ENCODE measurements at regions of chr22 and their contacts with region 1.

Region 1: DNA sequence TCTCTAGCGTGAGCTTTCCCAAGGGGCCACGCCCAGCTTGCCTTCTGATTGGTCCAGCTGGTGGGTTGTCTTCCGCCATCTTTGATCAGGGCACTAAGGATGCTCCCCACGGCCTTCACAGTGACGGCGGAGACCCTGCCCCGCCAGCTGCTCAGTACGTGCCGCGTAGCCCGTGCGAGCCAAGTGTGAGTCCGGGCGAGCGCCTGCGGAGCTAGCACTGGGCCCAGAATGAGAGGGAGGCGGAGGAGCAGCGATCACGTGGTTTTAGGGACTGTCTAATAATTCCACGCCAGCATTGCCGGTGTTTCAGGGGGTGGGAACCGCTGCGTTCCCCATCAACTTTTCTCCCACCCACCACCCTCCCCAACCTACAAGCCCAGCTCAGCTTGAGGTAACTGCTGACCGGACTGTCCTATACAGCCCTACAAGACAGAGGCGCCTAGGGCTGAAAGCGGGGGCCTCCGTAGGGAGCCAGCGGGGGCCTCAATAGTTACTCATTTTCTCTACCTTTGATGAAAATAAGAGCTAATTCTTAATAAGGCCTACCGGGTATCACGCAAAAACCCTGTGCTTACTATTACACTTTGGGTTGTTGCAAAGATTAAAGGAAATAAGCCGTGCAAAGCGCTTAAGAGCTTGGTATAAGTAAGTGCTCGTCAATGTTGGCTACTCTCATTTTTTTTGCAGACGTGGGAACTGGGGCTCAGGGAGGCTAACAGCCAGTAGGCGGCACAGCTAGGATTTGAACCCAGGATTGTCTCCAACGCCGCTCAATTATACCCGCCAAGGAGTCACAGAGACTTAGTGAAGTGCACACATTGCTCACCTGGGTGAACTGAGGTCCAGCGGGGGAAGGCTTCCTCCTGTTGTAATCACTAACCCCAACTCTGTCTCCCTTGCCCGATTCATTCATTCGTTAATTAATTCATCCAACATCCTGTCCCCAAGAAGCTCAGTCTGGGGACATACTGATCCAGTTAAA is 1.3 kb upstream of the MTFP1 start:
- DNase-seq: peak; percentile 91 to 100 (median 98)
- ATAC-seq: peak; percentile 82 to 83
- H3K4me3 Mint-ChIP-seq: peak overlapping the region; percentile 92 to 99 (median 98)
- H3K27ac Mint-ChIP-seq: peak overlapping the region; percentile 97 to 100 (median 99)
- H3K4me1 Mint-ChIP-seq: peaks cover 28 to 56% (median 55%) of the 10 kb centered on the region in 4 donors
- H3K27me3 Mint-ChIP-seq: no peaks in the 10 kb centered on the region

Region 2: DNA sequence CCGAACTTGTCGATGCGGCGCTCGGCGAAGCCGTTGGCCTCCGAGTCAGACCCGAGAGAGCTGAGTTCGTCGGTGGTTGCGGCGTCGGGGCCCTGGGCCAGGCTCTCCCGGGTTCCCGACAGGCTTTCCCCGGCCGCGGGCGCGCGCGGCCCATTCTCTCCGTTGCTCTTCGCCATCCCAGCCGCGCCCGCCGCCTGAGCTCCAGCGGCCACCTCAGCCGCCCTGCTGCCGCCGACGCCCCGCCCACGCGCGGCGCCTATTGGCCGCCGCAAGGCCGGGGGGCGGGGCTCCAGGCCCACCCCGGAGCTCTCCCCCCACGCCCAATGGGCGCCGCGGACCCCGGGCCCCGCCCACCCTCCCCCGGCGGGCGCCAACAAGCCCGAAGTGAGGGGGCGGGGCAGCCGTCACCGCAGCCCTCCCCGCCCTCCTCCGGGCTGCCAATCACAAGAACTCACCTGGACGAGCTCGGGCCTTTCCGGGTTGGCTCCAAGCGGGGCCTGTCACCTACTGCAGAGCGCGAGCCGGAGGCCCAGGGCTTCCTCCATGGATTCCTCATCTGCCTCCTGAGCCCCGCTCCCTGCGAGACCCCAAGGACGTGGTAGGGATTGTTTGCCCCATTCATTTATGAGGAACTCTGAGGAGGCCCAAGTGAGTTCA is 97.4 kb before region 1 on chr22 and contains the start of gene TBC1D10A:
- POLR2A ChIA-PET with region 1: interaction called, 14 read pairs
- DNase-seq: peak; percentile 85 to 98 (median 93)
- ATAC-seq: peak; percentile 87
- H3K4me3 Mint-ChIP-seq: peak within 1 kb of the TSS; percentile 89 to 98 (median 92)
- H3K27ac Mint-ChIP-seq: peak within 1 kb of the TSS; percentile 86 to 98 (median 94)
- H3K4me1 Mint-ChIP-seq: peaks cover 31 to 54% (median 48%) of the 10 kb centered on the region in 4 donors
- H3K27me3 Mint-ChIP-seq: no peaks in the 10 kb centered on the region
- polyA plus RNA-seq, gene TBC1D10A: 56.7 to 83.4 (median 62.0) TPM

Region 3: GRCh38 chr22:30386960-30387827 is 37.1 kb before region 1 on chr22 and contains the start of gene RNF215:
- POLR2A ChIA-PET with region 1: interaction called, 43 read pairs
- DNase-seq: peak; percentile 61 to 90 (median 81)
- ATAC-seq: peak; percentile 78
- H3K4me3 Mint-ChIP-seq: peak within 1 kb of the TSS; percentile 61 to 91 (median 80)
- H3K27ac Mint-ChIP-seq: peak within 1 kb of the TSS in 8 of 10 donors; percentile 55 to 93 (median 84)
- H3K4me1 Mint-ChIP-seq: peaks cover 14 to 27% (median 24%) of the 10 kb centered on the region in 4 donors
- H3K27me3 Mint-ChIP-seq: no peaks in the 10 kb centered on the region
- polyA plus RNA-seq, gene RNF215: 0.14 to 0.44 (median 0.39) TPM

Region 4: GRCh38 chr22:30396871-30397655 is 27.2 kb before region 1 on chr22 and contains the start of gene SEC14L2:
- POLR2A ChIA-PET with region 1: interaction called, 118 read pairs
- DNase-seq: peak; percentile 19 to 72 (median 58)
- ATAC-seq: peak; percentile 75 to 79
- H3K4me3 Mint-ChIP-seq: peak within 1 kb of the TSS; percentile 82 to 95 (median 90)
- H3K27ac Mint-ChIP-seq: peak within 1 kb of the TSS; percentile 78 to 96 (median 92)
- H3K4me1 Mint-ChIP-seq: peaks cover 30 to 66% (median 56%) of the 10 kb centered on the region in 4 donors
- H3K27me3 Mint-ChIP-seq: peaks cover 0 to 6% (median 0%) of the 10 kb centered on the region in 5 donors
- polyA plus RNA-seq, gene SEC14L2: 16.8 to 25.9 (median 22.5) TPM

Region 5: GRCh38 chr22:30402028-30402765 is 22.1 kb before region 1 on chr22:
- POLR2A ChIA-PET with region 1: interaction called, 118 read pairs
- DNase-seq: no peak
- ATAC-seq: no peak
- H3K4me3 Mint-ChIP-seq: no peak overlapping the region
- H3K27ac Mint-ChIP-seq: peak overlapping the region in 5 of 10 donors; percentile 29 to 82 (median 57)
- H3K4me1 Mint-ChIP-seq: peaks cover 21 to 30% (median 27%) of the 10 kb centered on the region in 4 donors
- H3K27me3 Mint-ChIP-seq: peaks cover 0 to 4% (median 0%) of the 10 kb centered on the region in 5 donors

Region 6: DNA sequence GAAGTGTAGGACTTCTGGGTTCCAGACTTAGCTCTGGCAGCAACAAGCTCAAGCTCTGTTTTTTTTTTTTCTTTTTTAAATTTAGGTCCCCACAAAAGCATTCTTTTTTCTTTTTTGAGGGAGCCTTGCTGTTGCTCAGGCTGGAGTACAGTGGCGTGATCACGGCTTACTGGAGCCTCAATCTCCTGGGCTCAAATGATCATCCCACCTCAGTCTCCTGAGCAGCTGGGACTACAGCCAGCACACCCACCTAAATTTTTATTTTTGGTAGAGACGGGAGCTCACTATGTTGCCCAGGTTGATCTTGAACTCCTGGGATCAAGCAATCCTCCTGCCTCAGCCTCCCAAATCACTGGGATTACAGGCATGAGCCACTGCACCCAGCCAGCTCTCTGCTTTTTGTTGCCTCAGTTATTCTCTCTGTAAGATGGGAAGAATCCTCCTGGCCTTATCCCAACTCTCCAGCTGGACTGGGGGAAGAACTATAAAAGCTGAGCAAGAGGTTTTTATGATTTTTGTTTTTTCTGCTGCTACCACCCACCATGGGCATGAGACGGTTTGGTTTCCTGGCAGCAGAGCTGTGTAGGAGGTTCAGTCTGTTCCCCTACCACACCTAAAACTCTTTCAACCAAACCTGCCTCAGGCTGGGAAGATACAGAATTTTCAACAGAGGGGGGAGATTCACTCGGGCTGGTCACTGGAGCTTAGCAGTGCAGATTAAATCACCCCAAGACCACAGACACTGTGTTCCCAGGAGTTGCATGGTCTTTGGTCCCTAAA is 10.3 kb before region 1 on chr22:
- POLR2A ChIA-PET with region 1: interaction called, 95 read pairs
- DNase-seq: peak in 2 of 10 donors; percentile 35 to 45
- ATAC-seq: peak; percentile 87
- H3K4me3 Mint-ChIP-seq: peak overlapping the region; percentile 0 to 84 (median 63)
- H3K27ac Mint-ChIP-seq: peak overlapping the region; percentile 87 to 97 (median 94)
- H3K4me1 Mint-ChIP-seq: peaks cover 24 to 68% (median 46%) of the 10 kb centered on the region in 4 donors
- H3K27me3 Mint-ChIP-seq: no peaks in the 10 kb centered on the region

Region 7: DNA sequence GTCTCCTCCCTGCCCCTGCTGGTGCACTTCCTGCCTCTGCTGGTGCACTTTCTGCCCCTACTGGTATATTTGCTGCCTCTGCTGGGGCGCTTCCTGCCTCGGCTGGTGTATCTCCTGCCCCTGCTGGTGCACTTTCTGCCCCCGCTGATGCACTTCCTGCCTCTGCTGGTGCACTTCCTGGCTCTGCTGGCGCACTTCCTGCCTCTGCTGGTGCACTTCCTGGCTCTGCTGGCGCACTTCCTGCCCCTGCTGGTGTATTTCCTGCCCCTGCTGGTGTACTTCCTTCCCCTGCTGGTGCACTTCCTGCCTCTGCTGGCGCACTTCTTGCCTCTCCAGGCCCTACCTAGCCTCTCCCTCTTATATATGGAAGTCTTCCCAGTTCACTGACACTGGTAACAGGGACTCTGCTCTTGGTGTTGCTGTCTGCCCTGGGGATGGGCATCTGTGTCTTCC is 11.4 kb after region 1 on chr22:
- POLR2A ChIA-PET with region 1: interaction called, 89 read pairs
- DNase-seq: peak; percentile 75 to 98 (median 92)
- ATAC-seq: peak; percentile 91
- H3K4me3 Mint-ChIP-seq: peak overlapping the region; percentile 73 to 93 (median 84)
- H3K27ac Mint-ChIP-seq: peak overlapping the region; percentile 94 to 100 (median 100)
- H3K4me1 Mint-ChIP-seq: peaks cover 12 to 23% (median 18%) of the 10 kb centered on the region in 4 donors
- H3K27me3 Mint-ChIP-seq: peaks cover 13 to 30% (median 16%) of the 10 kb centered on the region in 5 donors